ENCODE measurements at regions of chr3 and their contacts with region 1.

Region 1: GRCh38 chr3:67790043-67790442 is 135.6 kb upstream of the SUCLG2 start:
- DNase-seq: peak; percentile 81
- H3K4me3 Mint-ChIP-seq: no peak overlapping the region
- H3K27ac Mint-ChIP-seq: no peak overlapping the region
- H3K4me1 Mint-ChIP-seq: peaks cover 14% of the 10 kb centered on the region
- H3K27me3 Mint-ChIP-seq: no peaks in the 10 kb centered on the region

Region 2: DNA sequence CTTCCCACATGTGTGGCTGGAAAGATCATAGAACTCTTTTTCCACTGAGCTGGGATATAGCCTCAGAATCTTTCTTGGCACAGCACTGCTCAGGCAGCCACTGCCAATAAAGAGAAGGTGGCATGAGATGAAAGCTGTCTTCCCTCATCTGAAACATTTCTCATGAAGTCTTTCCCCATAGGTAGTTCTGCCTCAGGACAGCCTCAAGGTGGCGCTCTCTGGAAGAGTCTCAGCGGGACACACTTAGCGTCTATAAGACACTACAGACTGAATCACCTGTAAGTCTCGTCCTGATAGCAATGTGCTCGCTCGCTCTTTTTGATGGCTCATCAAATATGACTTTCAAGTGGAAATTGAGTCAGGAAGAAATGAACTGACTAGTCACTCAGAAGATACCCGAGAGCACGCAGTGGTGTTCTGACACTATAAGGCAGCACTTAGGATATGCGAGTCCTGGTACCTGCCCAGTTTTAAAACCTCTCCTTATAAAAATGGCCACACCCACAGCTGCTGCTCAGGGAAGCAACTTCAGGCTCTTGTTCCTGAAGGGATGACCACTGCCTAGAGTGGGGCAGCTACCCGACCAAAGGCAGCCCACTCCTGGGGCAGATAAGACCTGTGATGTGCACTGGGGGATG is 405.2 kb before region 1 on chr3:
- CTCF ChIA-PET with region 1: interaction called, 40 read pairs
- intact Hi-C with region 1: loop called (anchors 1 kb)
- DNase-seq: peak; percentile 67
- H3K4me3 Mint-ChIP-seq: no peak overlapping the region
- H3K27ac Mint-ChIP-seq: no peak overlapping the region
- H3K4me1 Mint-ChIP-seq: peaks cover 31% of the 10 kb centered on the region
- H3K27me3 Mint-ChIP-seq: no peaks in the 10 kb centered on the region

Region 3: GRCh38 chr3:67593761-67594244 is 196.2 kb before region 1 on chr3:
- CTCF ChIA-PET with region 1: no interaction called
- intact Hi-C with region 1: loop called (anchors 5 kb)
- DNase-seq: no peak
- H3K4me3 Mint-ChIP-seq: no peak overlapping the region
- H3K27ac Mint-ChIP-seq: no peak overlapping the region
- H3K4me1 Mint-ChIP-seq: peaks cover 53% of the 10 kb centered on the region
- H3K27me3 Mint-ChIP-seq: no peaks in the 10 kb centered on the region

Region 4: GRCh38 chr3:67662733-67663132 is 127.3 kb before region 1 on chr3:
- CTCF ChIA-PET with region 1: no interaction called
- intact Hi-C with region 1: loop called (anchors 1 kb)
- DNase-seq: peak; percentile 37
- H3K4me3 Mint-ChIP-seq: no peak overlapping the region
- H3K27ac Mint-ChIP-seq: no peak overlapping the region
- H3K4me1 Mint-ChIP-seq: peaks cover 45% of the 10 kb centered on the region
- H3K27me3 Mint-ChIP-seq: no peaks in the 10 kb centered on the region

Region 5: GRCh38 chr3:67897726-67898336 is 107.8 kb after region 1 on chr3:
- CTCF ChIA-PET with region 1: no interaction called
- intact Hi-C with region 1: no loop called
- DNase-seq: no peak
- H3K4me3 Mint-ChIP-seq: no peak overlapping the region
- H3K27ac Mint-ChIP-seq: no peak overlapping the region
- H3K4me1 Mint-ChIP-seq: peaks cover 3% of the 10 kb centered on the region
- H3K27me3 Mint-ChIP-seq: no peaks in the 10 kb centered on the region

Measured in activated naive CD4-positive, alpha-beta T cell treated with anti-CD3 and anti-CD28 coated beads for 36 hours (primary cell).